Mammary epithelial cell (primary cell): ENCODE measurements at regions of chr2 and their contacts with region 1.

Region 1: DNA sequence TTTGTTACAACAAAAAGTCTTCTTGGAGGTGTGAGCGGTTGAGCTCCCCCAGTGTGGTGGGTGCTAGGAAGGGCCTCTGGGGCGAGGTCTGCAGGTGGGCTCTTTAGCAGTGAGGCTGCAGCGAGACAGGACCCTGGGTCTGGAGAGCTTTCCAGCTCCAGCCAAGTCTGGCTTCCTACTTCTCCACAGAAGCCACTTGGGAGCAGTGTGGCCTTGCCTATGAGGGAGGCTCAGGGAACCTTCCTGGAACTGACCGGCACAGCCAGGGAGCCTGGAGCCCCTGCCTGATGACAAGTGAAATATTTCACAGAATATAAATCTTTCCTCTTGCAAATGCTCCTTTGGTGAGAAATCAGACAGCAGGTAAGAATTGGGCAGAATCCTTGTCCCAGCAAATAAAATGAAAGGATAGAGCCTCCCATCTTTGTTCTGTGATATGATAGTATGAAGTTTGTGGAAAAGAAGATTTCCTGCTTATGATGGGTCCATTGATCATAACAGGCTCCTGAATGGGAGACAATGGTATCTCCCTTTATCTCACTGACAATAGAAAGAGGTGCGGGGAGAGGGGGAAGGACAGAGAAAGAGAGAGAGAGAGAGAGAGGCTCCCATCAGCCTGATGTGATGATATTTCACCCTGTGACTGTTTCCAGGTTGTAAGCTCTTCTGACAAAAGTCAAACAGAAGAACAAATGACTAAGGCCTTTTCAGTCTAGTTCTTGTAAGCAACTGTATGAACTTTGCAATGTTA is 289.8 kb upstream of the SPRED2 start:
- DNase-seq: peak; percentile 9
- H3K4me3 ChIP-seq: no peak overlapping the region
- H3K27ac ChIP-seq: no peak overlapping the region
- H3K4me1 ChIP-seq: no peaks in the 10 kb centered on the region
- H3K27me3 ChIP-seq: peaks cover 4% of the 10 kb centered on the region
- CTCF ChIP-seq: peak in 1 of 2 donors; percentile 62

Region 2: DNA sequence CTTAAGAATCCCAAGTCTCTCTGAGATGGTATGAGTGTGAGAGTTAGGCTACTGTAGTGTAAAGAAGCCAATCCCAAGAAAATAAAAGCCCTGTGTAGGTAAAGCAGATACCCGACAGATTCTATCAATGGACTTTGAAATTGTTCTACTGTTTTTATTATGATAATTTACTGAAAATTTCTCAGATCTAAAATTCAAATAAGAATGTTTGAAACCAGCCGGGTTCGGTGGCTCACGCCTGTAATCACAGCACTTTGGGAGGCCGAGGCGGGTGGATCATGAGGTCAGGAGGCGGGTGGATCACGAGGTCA is 81.5 kb before region 1 on chr2:
- CTCF ChIA-PET with region 1: no interaction called
- dilution Hi-C with region 1: no loop called
- in situ Hi-C with region 1: no loop called
- intact Hi-C with region 1: loop called (anchors 1 kb)
- DNase-seq: no peak
- H3K4me3 ChIP-seq: no peak overlapping the region
- H3K27ac ChIP-seq: no peak overlapping the region
- H3K4me1 ChIP-seq: peaks cover 11% of the 10 kb centered on the region
- H3K27me3 ChIP-seq: peaks cover 3% of the 10 kb centered on the region
- CTCF ChIP-seq: no peak

Region 3: GRCh38 chr2:65789923-65790675 is 67.9 kb after region 1 on chr2:
- CTCF ChIA-PET with region 1: no interaction called
- dilution Hi-C with region 1: no loop called
- in situ Hi-C with region 1: no loop called
- intact Hi-C with region 1: no loop called
- DNase-seq: no peak
- H3K4me3 ChIP-seq: no peak overlapping the region
- H3K27ac ChIP-seq: no peak overlapping the region
- H3K4me1 ChIP-seq: no peaks in the 10 kb centered on the region
- H3K27me3 ChIP-seq: no peaks in the 10 kb centered on the region
- CTCF ChIP-seq: no peak

Region 4: GRCh38 chr2:65918760-65919187 is 196.6 kb after region 1 on chr2:
- CTCF ChIA-PET with region 1: no interaction called
- dilution Hi-C with region 1: no loop called
- in situ Hi-C with region 1: no loop called
- intact Hi-C with region 1: loop called (anchors 10 kb)
- DNase-seq: no peak
- H3K4me3 ChIP-seq: no peak overlapping the region
- H3K27ac ChIP-seq: no peak overlapping the region
- H3K4me1 ChIP-seq: no peaks in the 10 kb centered on the region
- H3K27me3 ChIP-seq: no peaks in the 10 kb centered on the region
- CTCF ChIP-seq: peak in 1 of 2 donors; percentile 22

Region 5: GRCh38 chr2:66013465-66013864 is 291.3 kb after region 1 on chr2:
- CTCF ChIA-PET with region 1: no interaction called
- dilution Hi-C with region 1: no loop called
- in situ Hi-C with region 1: no loop called
- intact Hi-C with region 1: loop called (anchors 10 kb)
- DNase-seq: no peak
- H3K4me3 ChIP-seq: no peak overlapping the region
- H3K27ac ChIP-seq: no peak overlapping the region
- H3K4me1 ChIP-seq: no peaks in the 10 kb centered on the region
- H3K27me3 ChIP-seq: no peaks in the 10 kb centered on the region
- CTCF ChIP-seq: peak in 1 of 2 donors; percentile 8

Region 6: GRCh38 chr2:66429071-66429477 is 706.9 kb after region 1 on chr2:
- CTCF ChIA-PET with region 1: interaction called, 3 read pairs
- dilution Hi-C with region 1: no loop called
- in situ Hi-C with region 1: no loop called
- intact Hi-C with region 1: loop called (anchors 1 kb)
- DNase-seq: peak; percentile 41
- H3K4me3 ChIP-seq: no peak overlapping the region
- H3K27ac ChIP-seq: no peak overlapping the region
- H3K4me1 ChIP-seq: peaks cover 4% of the 10 kb centered on the region
- H3K27me3 ChIP-seq: peaks cover 23% of the 10 kb centered on the region
- CTCF ChIP-seq: peak; percentile 93 to 95